Left colon (tissue), 2 donors: ENCODE measurements at regions of chrX and their contacts with region 1.

Region 1: GRCh38 chrX:57595381-57595811 is 3.6 kb downstream of the ZXDB start:
- DNase-seq: no peak
- ATAC-seq: no peak

Region 2: GRCh38 chrX:57821703-57822375 is 226.4 kb after region 1 on chrX:
- intact Hi-C with region 1: no loop called
- DNase-seq: peak in 1 of 2 donors; percentile 7
- ATAC-seq: peak; percentile 75

Region 3: GRCh38 chrX:57918750-57919436 is 323.5 kb after region 1 on chrX:
- intact Hi-C with region 1: loop called in 1 of 2 experiments (anchors 10 kb)
- DNase-seq: peak in 1 of 2 donors; percentile 40
- ATAC-seq: peak; percentile 75

Region 4: GRCh38 chrX:58025979-58026378 is 430.6 kb after region 1 on chrX:
- intact Hi-C with region 1: no loop called
- DNase-seq: peak in 1 of 2 donors; percentile 37
- ATAC-seq: no peak